Heart right ventricle (tissue), 16 donors: ENCODE measurements at regions of chr20 and their contacts with region 1.

Region 1: GRCh38 chr20:62623488-62624324 is 18.6 kb upstream of the SLCO4A1 start:
- DNase-seq: peak; percentile 94
- ATAC-seq: peak; percentile 90 to 96 (median 94)
- H3K4me3 ChIP-seq: peak overlapping the region in 6 of 10 donors; percentile 5 to 23 (median 18)
- H3K27ac ChIP-seq: peak overlapping the region; percentile 72 to 95 (median 90)
- H3K4me1 ChIP-seq: peaks cover 11 to 49% (median 37%) of the 10 kb centered on the region in 9 donors
- H3K27me3 ChIP-seq: no peaks in the 10 kb centered on the region
- CTCF ChIP-seq: peak in 2 of 9 donors; percentile 10 to 24

Region 2: DNA sequence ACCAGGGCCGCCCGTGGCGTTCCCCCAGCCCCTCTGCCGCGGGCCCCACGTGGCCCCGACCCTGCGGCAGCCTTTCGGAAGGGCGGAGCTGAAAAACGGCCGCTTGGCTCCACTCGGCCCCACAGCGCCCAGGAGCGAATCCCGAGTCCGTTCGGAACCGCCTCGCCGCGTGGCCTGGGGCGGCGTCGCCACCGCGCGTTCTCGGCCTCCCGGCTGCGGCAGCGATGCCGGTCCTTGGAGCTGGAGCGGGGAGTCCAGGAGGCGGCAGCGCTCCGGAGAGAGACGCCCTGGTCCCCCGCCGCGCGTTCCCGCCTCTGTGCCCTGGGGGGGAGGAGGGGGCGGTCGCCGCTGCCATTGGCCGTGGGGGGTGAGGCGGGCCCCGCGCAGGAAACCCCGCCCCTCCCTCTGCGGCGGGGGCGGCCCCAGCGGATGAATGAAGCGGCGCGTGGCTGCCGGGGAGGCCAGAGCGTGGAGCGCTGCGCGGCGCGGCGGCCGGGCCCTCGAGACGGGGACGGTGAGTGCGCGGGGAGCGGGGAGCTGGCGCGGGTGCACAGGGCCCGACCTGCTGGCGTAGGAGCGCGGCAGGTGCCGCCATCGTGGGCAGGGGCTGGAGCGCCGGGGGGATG is 18.4 kb after region 1 on chr20 and contains the start of gene SLCO4A1:
- intact Hi-C with region 1: no loop called
- DNase-seq: peak; percentile 70 to 86
- ATAC-seq: peak; percentile 86 to 92 (median 88)
- H3K4me3 ChIP-seq: peak within 1 kb of the TSS; percentile 55 to 72 (median 66)
- H3K27ac ChIP-seq: peak within 1 kb of the TSS; percentile 64 to 90 (median 75)
- H3K4me1 ChIP-seq: peaks cover 12 to 56% (median 43%) of the 10 kb centered on the region in 9 donors
- H3K27me3 ChIP-seq: peaks cover 0 to 59% (median 20%) of the 10 kb centered on the region in 7 donors
- CTCF ChIP-seq: peak in 3 of 9 donors; percentile 6 to 35 (median 22)
- total RNA-seq, gene SLCO4A1: 1.5 to 34.3 (median 4.9) TPM

Region 3: GRCh38 chr20:62652051-62652926 is 28.6 kb after region 1 on chr20:
- intact Hi-C with region 1: loop called in 1 of 10 experiments (anchors 1 kb)
- DNase-seq: peak; percentile 91 to 95
- ATAC-seq: peak; percentile 90 to 96 (median 94)
- H3K4me3 ChIP-seq: peak overlapping the region in 7 of 10 donors; percentile 0 to 41 (median 26)
- H3K27ac ChIP-seq: peak overlapping the region; percentile 79 to 95 (median 90)
- H3K4me1 ChIP-seq: peaks cover 15 to 53% (median 42%) of the 10 kb centered on the region in 9 donors
- H3K27me3 ChIP-seq: no peaks in the 10 kb centered on the region
- CTCF ChIP-seq: peak in 2 of 9 donors; percentile 7 to 21